GM10248 (cell line): ENCODE measurements at regions of chr7 and their contacts with region 1.

Region 1: GRCh38 chr7:93902777-93903423 is 3.5 kb upstream of the GNGT1 start:
- DNase-seq: peak; percentile 18
- CTCF ChIP-seq: peak; percentile 46

Region 2: GRCh38 chr7:93544691-93545090 is 358.2 kb before region 1 on chr7:
- CTCF ChIA-PET with region 1: no interaction called
- POLR2A ChIA-PET with region 1: no interaction called
- DNase-seq: no peak
- CTCF ChIP-seq: no peak

Region 3: DNA sequence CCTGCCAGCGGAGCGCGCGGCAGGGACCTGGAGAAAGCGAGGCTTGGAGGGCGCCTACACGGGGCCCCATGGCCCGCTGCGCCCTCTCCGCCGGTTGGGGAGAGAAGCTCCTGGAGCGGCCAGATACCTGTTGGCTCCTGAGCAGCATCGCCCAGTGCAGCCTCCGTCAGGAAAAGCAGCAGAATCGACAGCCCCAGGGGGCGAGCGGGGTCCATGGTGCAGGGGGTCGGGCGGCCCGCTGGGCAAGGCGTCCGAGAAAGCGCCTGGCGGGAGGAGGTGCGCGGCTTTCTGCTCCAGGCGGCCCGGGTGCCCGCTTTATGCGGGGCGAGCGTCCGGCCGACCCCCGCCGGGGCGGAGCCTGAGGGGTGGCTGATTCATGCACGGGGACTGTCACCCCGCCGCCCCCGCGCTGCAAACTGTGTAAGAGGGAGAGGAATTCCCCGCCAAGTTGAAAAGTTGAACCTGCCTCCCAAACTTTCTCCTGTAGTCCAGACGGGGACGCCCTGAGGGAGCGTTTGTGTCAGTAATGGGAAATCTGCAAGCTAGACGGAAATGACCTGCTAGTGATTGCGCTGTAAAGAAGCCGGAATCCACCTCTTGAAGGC is 12.3 kb before region 1 on chr7 and contains the start of gene TFPI2:
- CTCF ChIA-PET with region 1: interaction called, 10 read pairs
- POLR2A ChIA-PET with region 1: no interaction called
- DNase-seq: peak; percentile 42
- CTCF ChIP-seq: no peak

Region 4: DNA sequence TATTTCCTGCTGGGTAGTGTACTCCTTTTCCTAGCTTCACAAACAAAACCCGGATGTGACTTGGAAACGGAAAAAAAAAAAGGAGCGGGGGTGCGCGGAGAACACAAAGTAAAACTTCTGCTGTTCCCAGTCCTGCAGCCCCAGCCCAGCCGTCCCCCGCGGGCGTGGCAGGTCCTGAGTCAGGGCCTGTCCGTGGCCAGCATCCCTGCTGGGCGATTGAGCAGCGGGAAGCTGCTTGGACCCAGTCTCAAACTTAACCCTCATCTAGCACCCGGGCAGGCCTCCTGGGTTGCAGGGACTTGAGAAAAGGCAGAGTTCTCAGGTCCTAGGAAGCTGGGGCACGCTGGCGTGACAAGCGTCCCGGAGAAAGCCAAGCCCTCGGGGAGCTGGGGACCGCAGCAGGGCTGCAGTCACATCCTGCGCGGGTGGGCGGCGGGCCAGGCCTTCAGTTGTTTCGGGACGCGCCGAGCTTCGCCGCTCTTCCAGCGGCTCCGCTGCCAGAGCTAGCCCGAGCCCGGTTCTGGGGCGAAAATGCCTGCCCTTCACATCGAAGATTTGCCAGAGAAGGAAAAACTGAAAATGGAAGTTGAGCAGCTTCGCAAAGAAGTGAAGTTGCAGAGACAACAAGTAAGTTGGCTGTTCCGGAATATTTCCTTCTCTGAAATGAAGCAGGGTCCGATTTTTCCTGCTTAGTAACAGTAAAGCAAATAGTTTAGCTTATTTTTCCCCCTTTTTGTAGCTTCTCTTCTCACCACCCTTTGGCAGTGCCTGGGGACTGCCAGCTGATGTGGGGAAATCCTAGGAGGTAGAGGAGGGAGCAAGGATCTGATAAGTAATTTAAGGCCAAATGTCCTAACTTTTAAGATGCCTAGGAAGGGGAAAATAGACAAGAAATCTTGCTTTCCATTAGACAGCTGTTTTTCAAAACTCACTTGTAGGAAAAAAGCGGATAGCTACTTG is 19.0 kb after region 1 on chr7 and contains the start of gene GNG11:
- CTCF ChIA-PET with region 1: interaction called, 11 read pairs
- POLR2A ChIA-PET with region 1: no interaction called
- DNase-seq: peak; percentile 54
- CTCF ChIP-seq: no peak

Region 5: GRCh38 chr7:94087664-94088352 is 184.9 kb after region 1 on chr7:
- CTCF ChIA-PET with region 1: interaction called, 101 read pairs
- POLR2A ChIA-PET with region 1: no interaction called
- DNase-seq: peak; percentile 76
- CTCF ChIP-seq: peak; percentile 84